Activated CD4-positive, alpha-beta memory T cell treated with anti-CD3 and anti-CD28 coated beads, Interleukin-2, amount 10 ng/mL, durations not matched to agents 7 days and 5 days (primary cell): ENCODE measurements at regions of chr17 and their contacts with region 1.

Region 1: DNA sequence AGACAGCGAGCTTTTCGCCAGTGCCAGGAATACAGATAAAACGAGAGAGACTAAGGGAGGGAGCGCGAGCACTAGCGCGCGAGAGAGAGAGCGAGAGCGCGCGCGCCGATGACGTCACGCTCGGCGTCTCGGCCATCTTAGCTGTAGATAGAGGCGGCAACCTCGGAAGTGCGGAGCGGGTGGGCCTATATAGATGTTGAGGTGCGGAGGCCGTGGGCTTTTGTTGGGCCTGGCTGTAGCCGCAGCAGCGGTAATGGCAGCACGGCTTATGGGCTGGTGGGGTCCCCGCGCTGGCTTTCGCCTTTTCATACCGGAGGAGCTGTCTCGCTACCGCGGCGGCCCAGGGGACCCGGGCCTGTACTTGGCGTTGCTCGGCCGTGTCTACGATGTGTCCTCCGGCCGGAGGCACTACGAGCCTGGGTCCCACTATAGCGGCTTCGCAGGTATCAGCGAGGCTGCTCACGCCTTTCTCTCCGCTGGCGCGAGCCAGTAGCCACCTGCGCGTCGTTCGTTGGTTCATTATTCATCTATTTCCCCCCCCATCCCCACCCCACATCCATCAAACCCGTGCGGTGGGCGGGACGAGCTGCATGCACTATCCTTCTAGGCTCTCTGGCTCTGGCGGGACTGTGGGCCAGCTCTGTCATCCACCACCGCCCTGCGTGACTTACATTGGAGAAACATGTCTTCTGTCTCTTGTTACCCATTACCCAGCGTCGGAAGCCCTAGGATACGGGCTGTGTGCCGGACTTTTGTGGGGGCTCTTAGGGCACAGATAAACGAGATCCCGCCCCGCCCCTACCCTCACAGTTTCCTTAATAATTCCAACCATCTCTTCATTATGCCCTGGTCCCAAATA is 795 bp downstream of the CYB5D2 start:
- DNase-seq: peak; percentile 91
- H3K4me3 Mint-ChIP-seq: peak overlapping the region; percentile 98
- H3K27ac Mint-ChIP-seq: peak overlapping the region; percentile 100
- H3K4me1 Mint-ChIP-seq: peaks cover 49% of the 10 kb centered on the region
- H3K27me3 Mint-ChIP-seq: no peaks in the 10 kb centered on the region

Region 2: GRCh38 chr17:3965118-3965803 is 178.5 kb before region 1 on chr17:
- CTCF ChIA-PET with region 1: interaction called, 3 read pairs
- POLR2A ChIA-PET with region 1: interaction called, 21 read pairs
- DNase-seq: peak; percentile 85
- H3K4me3 Mint-ChIP-seq: peak overlapping the region; percentile 86
- H3K27ac Mint-ChIP-seq: peak overlapping the region; percentile 95
- H3K4me1 Mint-ChIP-seq: peaks cover 48% of the 10 kb centered on the region
- H3K27me3 Mint-ChIP-seq: peaks cover 3% of the 10 kb centered on the region

Region 3: DNA sequence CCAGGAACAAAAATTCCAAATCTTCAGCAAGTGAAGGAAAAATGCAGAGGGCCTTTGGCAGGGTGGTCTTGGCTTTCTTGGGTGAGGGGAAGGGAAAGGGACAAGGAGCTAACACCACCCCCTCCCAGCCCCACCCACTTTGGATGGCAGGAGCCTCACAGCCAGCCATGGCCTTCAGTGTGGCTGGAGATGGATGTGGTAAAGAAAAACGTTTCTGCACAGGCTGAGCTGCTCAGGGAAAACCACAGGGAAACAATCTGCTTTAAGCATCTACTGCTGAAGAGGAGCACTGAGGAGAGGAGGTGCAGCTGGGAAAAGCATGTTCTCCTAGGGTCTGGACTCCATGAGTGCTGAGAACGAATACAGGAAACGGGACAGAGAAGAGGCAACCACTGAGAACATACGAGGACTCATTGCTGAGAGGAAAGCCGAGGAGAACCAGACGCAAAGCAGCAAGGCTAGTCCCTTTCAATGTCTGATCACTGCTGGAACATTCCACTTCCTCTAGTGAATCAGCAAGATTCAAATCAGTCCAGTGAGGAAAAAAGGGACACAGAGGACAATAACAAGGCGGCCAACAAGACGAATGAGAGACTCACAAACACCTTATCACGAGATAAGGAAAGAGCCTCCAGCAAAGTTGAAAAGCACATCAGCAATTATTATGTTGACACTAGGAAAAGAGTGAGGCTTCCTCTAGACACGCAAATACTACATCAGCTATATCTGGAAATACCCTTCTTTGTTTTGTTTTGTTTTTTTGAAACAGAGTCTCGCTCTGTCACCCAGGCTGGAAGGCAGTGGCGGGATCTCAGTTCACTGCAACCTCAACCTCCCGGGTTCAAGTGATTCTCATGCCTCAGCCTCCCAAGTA is 42.7 kb before region 1 on chr17:
- CTCF ChIA-PET with region 1: interaction called, 3 read pairs
- POLR2A ChIA-PET with region 1: interaction called, 21 read pairs
- DNase-seq: no peak
- H3K4me3 Mint-ChIP-seq: no peak overlapping the region
- H3K27ac Mint-ChIP-seq: peak overlapping the region; percentile 71
- H3K4me1 Mint-ChIP-seq: peaks cover 29% of the 10 kb centered on the region
- H3K27me3 Mint-ChIP-seq: no peaks in the 10 kb centered on the region

Region 4: GRCh38 chr17:4161179-4161559 is 17.4 kb after region 1 on chr17:
- CTCF ChIA-PET with region 1: interaction called, 20 read pairs
- POLR2A ChIA-PET with region 1: interaction called, 178 read pairs
- DNase-seq: no peak
- H3K4me3 Mint-ChIP-seq: no peak overlapping the region
- H3K27ac Mint-ChIP-seq: peak overlapping the region; percentile 69
- H3K4me1 Mint-ChIP-seq: peaks cover 28% of the 10 kb centered on the region
- H3K27me3 Mint-ChIP-seq: no peaks in the 10 kb centered on the region

Region 5: DNA sequence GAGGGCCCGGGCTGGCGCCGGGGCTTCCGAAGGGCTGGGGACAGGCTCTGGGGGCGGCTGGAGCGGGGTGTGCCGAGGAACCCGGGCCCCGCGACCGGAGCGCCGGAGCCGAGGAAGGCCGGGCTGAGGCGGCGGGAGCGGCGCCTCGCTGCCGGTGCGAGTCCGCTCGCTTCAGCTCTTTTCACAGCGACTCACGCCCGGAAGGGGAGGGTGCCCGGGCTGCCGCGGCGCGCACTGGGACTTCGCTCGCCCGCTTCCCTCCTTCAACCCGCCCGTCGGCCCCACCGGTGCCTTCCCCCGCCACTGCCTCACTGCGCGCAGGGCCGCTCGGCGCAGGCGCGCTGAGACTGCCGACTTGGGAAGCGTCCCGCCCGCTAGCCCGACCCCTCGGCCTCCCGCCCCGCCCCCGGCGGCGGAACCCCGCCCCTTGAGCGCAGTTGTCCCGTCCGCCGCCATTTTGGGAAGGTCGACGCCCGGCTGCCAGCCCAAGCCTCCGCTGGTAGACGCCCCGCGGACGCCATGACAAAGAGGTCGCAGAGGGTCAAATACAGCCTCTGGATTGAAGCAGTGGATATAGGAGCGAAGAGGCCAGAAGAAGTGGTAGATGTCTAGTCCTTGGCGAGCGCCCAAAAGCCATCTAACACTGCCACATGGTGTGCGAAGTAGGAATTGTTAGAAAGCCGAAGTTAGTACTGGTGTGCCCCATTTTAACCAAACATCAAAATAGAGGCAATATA is 222.7 kb after region 1 on chr17 and contains the start of gene UBE2G1:
- CTCF ChIA-PET with region 1: no interaction called
- POLR2A ChIA-PET with region 1: interaction called, 16 read pairs
- DNase-seq: peak; percentile 99
- H3K4me3 Mint-ChIP-seq: peak within 1 kb of the TSS; percentile 69
- H3K27ac Mint-ChIP-seq: peak within 1 kb of the TSS; percentile 86
- H3K4me1 Mint-ChIP-seq: peaks cover 42% of the 10 kb centered on the region
- H3K27me3 Mint-ChIP-seq: no peaks in the 10 kb centered on the region
- total RNA-seq, gene UBE2G1: 65.3 to 66.4 TPM